H1 (cell line): ENCODE measurements at regions of chr6 and their contacts with region 1.

Region 1: GRCh38 chr6:138001750-138002349 is 105.4 kb downstream of the PERP start:
- DNase-seq: peak in 1 of 2 experiments; percentile 73
- H3K4me3 ChIP-seq: no peak overlapping the region
- H3K27ac ChIP-seq: no peak overlapping the region
- H3K4me1 ChIP-seq: peaks cover 0 to 5% (median 1%) of the 10 kb centered on the region in 4 experiments; a peak in 3 of 7 replicates
- H3K27me3 ChIP-seq: no peaks in the 10 kb centered on the region
- CTCF ChIP-seq: peak; percentile 7 to 85 (median 78)
- EP300 ChIP-seq: no peak
- POLR2A ChIP-seq: no peak
- RAD21 ChIP-seq: peak; percentile 91 to 93

Region 2: GRCh38 chr6:137756783-137757182 is 245.1 kb before region 1 on chr6:
- CTCF ChIA-PET with region 1: no interaction called
- POLR2A ChIA-PET with region 1: no interaction called
- DNase-seq: no peak
- H3K4me3 ChIP-seq: no peak overlapping the region
- H3K27ac ChIP-seq: no peak overlapping the region
- H3K4me1 ChIP-seq: no peaks in the 10 kb centered on the region
- H3K27me3 ChIP-seq: no peaks in the 10 kb centered on the region
- CTCF ChIP-seq: no peak
- EP300 ChIP-seq: no peak
- POLR2A ChIP-seq: no peak
- RAD21 ChIP-seq: no peak

Region 3: GRCh38 chr6:137903933-137904821 is 97.7 kb before region 1 on chr6:
- CTCF ChIA-PET with region 1: no interaction called
- POLR2A ChIA-PET with region 1: no interaction called
- DNase-seq: no peak
- H3K4me3 ChIP-seq: no peak overlapping the region
- H3K27ac ChIP-seq: no peak overlapping the region
- H3K4me1 ChIP-seq: no peaks in the 10 kb centered on the region
- H3K27me3 ChIP-seq: no peaks in the 10 kb centered on the region
- CTCF ChIP-seq: no peak
- EP300 ChIP-seq: no peak
- POLR2A ChIP-seq: no peak
- RAD21 ChIP-seq: no peak

Region 4: DNA sequence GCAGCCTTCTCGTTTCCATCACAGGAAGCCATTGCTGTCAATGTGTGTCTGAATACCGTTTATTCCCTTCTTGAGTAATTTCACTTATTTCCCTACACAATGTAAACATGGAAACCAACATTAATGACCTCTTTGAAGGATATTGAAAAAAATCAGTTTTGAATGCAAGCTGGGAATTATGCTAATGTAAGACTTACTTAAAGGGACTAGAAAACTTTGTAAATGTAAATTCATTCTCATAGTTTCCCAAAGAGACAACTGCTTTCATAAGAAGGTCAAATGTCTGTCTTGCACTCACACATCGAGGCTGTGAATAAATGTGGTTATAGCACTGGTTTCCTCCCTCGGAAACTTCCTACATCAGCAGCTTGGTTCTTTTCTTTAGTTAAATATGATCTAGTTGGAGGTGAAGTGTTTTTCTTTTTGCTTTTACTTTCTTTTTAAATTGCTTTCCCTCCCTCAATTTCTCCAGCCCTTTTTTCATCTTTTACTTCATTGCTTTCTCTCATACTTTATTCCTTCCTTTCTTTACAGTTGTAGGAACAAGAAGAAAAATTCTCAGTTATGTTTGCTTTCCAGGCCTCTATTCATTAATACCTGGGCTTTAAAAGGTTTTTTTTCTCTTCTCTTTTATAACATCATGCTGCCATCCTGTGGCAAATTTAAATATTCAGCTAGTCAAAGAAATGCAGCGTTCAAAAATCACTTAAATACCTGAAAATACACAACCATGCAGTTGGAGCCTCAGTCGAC is 26.5 kb before region 1 on chr6:
- CTCF ChIA-PET with region 1: interaction called, 10 read pairs
- POLR2A ChIA-PET with region 1: no interaction called
- DNase-seq: no peak
- H3K4me3 ChIP-seq: no peak overlapping the region
- H3K27ac ChIP-seq: no peak overlapping the region
- H3K4me1 ChIP-seq: no peaks in the 10 kb centered on the region
- H3K27me3 ChIP-seq: no peaks in the 10 kb centered on the region
- CTCF ChIP-seq: no peak; a peak in 1 of 4 replicates
- EP300 ChIP-seq: no peak
- POLR2A ChIP-seq: no peak
- RAD21 ChIP-seq: peak; percentile 33 to 49

Region 5: GRCh38 chr6:137989664-137990063 is 12.2 kb before region 1 on chr6:
- CTCF ChIA-PET with region 1: interaction called, 15 read pairs
- POLR2A ChIA-PET with region 1: no interaction called
- DNase-seq: no peak
- H3K4me3 ChIP-seq: no peak overlapping the region
- H3K27ac ChIP-seq: no peak overlapping the region
- H3K4me1 ChIP-seq: no peaks in the 10 kb centered on the region
- H3K27me3 ChIP-seq: no peaks in the 10 kb centered on the region
- CTCF ChIP-seq: no peak
- EP300 ChIP-seq: no peak
- POLR2A ChIP-seq: no peak
- RAD21 ChIP-seq: no peak

Region 6: GRCh38 chr6:138012682-138013081 is 10.8 kb after region 1 on chr6:
- CTCF ChIA-PET with region 1: interaction called, 46 read pairs
- POLR2A ChIA-PET with region 1: no interaction called
- DNase-seq: no peak
- H3K4me3 ChIP-seq: no peak overlapping the region
- H3K27ac ChIP-seq: no peak overlapping the region
- H3K4me1 ChIP-seq: no peaks in the 10 kb centered on the region; a peak in 1 of 7 replicates
- H3K27me3 ChIP-seq: no peaks in the 10 kb centered on the region
- CTCF ChIP-seq: no peak
- EP300 ChIP-seq: no peak
- POLR2A ChIP-seq: no peak
- RAD21 ChIP-seq: no peak

Region 7: DNA sequence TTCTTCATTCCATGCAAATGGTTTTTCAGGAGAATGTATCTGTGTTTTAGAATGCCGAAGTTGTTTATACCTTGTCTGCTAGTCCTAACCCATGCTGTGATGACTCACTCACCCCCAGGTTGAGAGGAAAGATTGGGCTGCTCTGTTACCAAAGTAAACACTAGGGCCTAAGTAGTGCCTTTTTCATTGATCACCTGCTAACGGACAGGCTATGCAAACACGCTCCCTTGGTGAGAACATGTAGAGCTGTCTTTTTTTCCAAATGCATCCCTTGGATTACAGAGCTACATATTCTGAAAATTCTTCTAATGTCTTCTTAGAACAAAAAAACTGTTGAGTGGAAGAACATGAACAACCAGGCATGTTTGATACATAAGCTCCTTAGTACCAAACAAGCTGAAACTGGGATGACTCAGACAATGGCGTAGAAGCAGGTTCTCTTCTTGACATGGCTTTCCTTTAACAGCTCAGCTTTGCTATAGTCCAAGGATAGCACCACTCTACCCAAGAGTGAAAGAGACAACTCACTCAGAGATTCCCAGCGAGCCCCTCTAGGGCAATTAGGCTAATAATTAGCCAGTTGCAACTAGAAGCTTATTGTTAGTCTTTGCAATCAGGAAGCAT is 84.8 kb after region 1 on chr6:
- CTCF ChIA-PET with region 1: interaction called, 45 read pairs
- POLR2A ChIA-PET with region 1: no interaction called
- DNase-seq: peak in 1 of 2 experiments; percentile 50
- H3K4me3 ChIP-seq: no peak overlapping the region
- H3K27ac ChIP-seq: no peak overlapping the region
- H3K4me1 ChIP-seq: peaks cover 6 to 12% (median 9%) of the 10 kb centered on the region in 4 experiments
- H3K27me3 ChIP-seq: peaks cover 0 to 3% (median 1%) of the 10 kb centered on the region in 4 experiments; a peak in 1 of 7 replicates
- CTCF ChIP-seq: no peak
- EP300 ChIP-seq: no peak
- POLR2A ChIP-seq: no peak
- RAD21 ChIP-seq: no peak

Region 8: GRCh38 chr6:138109042-138109997 is 107.5 kb after region 1 on chr6:
- CTCF ChIA-PET with region 1: interaction called, 101 read pairs
- POLR2A ChIA-PET with region 1: interaction called, 8 read pairs
- DNase-seq: peak in 1 of 2 experiments; percentile 82
- H3K4me3 ChIP-seq: no peak overlapping the region
- H3K27ac ChIP-seq: no peak overlapping the region
- H3K4me1 ChIP-seq: peaks cover 0 to 6% (median 4%) of the 10 kb centered on the region in 4 experiments; a peak in 3 of 7 replicates
- H3K27me3 ChIP-seq: peaks cover 0 to 9% (median 2%) of the 10 kb centered on the region in 4 experiments; a peak in 2 of 7 replicates
- CTCF ChIP-seq: peak; percentile 22 to 81 (median 80)
- EP300 ChIP-seq: no peak
- POLR2A ChIP-seq: no peak
- RAD21 ChIP-seq: peak; percentile 87 to 91